Left cardiac atrium (tissue), 4 donors: ENCODE measurements at regions of chr17 and their contacts with region 1.

Region 1: GRCh38 chr17:1783834-1784611 is 22.2 kb downstream of the SERPINF1 start:
- DNase-seq: peak; percentile 89
- ATAC-seq: peak; percentile 76 to 77

Region 2: DNA sequence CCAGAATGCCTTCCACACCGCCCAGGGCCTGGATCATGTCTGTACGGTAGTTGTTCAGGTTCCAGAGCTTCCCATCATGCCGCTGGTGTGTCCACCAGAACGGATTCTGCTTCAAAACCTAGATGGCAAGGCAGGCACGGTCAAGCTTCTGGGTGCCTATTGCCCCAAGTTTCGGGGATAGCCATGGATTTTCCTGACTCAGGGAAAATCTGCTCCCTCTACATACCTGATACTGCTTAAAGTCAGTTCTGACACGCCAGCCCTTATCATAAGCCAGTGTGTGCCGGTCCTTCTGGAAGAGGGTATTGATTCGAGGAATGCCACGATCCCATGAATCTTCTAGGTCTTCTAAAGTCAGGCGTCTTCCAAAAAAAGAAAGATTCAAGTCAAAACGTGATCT is 123.0 kb before region 1 on chr17:
- intact Hi-C with region 1: loop called in 1 of 2 experiments (anchors 10 kb)
- DNase-seq: no peak
- ATAC-seq: no peak

Region 3: GRCh38 chr17:1673041-1673785 is 110.8 kb before region 1 on chr17:
- intact Hi-C with region 1: loop called (anchors 5 to 10 kb)
- DNase-seq: no peak
- ATAC-seq: no peak

Region 4: DNA sequence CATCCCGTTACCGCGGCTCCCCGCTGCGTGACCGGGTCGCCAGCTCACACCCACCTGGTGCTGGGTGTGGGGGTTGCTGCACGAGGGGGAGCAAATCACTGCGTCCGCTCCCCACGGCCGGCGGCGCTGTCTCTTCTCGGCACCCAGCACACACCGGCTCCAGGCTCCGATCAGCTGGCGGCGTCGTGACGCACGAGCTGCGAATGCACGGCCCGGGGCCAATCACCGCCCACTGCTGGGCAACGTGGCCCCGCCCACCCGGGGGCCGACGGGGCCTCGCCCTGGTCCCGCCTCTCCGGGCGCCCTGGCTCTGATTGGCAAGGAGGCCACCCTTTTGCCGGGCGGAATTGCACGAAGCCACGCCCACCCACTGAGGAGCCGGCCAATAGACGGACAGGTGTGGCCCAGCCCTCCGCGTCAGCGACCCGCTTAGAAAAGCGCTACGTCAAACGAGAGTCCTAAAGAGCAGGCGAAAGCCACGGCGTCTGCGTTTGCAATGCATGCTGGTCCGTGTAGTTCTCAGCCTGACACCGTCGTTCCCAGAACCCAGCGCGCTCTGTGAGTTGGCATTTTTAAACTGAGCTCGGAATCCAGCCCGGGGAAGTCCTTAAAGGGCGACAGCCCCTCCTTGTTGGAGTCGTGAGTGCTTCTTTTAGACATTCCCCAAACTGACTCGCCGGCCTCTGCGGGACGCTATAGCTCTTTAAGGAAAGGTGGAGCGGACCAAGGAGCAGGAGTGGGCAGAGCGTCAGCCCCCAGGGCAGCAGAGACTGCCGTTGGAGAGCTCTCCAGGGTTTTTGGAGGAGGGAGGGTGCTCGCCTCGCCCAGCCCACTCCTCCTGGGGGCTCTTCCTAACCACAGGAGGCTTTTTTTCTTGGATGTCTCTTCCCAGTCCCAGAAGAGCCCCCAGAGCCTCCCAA is 67.7 kb before region 1 on chr17:
- intact Hi-C with region 1: loop called (anchors 2 to 5 kb)
- DNase-seq: peak; percentile 100
- ATAC-seq: peak; percentile 74 to 79

Region 5: DNA sequence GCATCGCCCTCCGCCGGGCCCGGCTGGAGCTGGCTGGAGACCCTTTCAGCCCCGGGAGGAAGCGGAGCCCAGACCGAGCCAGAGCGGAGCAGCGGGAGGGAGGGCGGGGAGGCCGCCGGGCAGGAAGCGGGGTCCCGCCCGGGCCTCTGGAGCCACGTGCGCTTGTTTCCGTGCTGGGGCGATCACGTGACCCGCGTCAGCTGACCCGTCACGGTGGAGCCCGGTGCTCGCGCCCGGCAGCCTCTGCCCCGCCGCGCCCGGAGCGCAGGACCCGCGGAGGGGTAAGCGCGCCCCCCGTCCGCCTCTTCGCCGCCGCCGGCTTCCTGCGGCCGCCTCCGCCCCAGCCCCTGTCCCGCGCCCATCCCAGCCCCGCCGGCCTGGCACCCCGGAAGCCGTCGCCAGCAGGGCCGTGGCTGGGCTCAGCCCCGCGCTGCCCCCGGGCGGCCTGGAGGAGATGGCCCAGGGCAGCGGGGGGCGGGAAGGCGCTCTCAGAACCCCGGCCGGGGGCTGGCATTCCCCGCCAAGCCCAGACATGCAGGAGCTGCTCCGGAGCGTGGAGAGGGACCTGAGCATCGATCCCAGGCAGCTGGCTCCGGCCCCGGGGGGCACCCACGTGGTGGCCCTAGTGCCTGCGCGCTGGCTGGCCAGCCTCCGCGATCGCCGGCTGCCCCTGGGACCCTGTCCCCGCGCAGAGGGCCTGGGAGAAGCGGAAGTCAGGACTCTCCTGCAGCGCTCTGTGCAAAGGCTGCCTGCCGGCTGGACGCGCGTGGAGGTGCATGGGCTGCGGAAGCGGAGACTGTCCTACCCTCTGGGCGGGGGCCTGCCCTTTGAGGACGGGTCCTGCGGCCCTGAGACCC is 59.3 kb before region 1 on chr17 and contains the start of gene WDR81:
- intact Hi-C with region 1: loop called in 1 of 2 experiments (anchors 5 kb)
- DNase-seq: peak; percentile 97
- ATAC-seq: peak; percentile 85 to 92
- total RNA-seq, gene WDR81: 15.4 to 16.1 TPM

Region 6: DNA sequence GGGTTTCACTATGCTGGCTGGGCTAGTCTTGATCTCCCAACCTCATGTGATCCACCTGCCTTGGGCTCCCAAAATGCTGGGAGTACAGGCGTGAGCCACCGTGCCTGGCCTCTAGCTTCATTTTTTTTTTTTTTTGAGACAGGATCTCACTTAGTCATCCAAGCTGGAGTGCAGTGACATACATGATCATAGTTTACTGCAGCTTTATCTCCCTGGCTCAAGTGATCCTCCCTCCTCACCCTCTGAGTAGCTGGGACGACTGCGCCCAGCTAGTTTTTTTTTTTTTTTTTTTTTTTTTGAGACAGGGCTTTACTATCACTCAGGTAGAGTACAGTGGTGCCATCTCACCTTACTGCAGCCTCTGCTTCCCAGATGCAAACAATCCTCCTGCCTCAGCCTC is 55.5 kb after region 1 on chr17:
- intact Hi-C with region 1: no loop called
- DNase-seq: no peak
- ATAC-seq: peak in 1 of 2 donors; percentile 80

Region 7: DNA sequence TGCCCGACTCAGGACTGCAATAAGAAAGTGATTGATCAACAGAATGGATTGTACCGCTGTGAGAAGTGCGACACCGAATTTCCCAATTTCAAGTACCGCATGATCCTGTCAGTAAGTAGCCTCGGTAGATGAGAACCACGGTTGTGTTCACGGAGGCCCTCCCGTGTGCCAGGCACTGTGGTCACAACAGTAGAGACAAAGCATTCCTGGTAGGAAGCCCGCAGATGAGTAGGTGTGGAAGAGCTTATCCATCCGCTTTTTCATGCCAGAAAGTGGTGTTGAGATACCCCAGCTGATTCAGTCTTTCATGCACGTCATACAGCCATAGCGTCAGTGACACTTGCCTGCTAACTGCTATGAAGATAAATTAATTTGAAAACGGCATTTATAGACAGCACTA is 104.7 kb after region 1 on chr17:
- intact Hi-C with region 1: loop called in 1 of 2 experiments (anchors 2 kb)
- DNase-seq: peak; percentile 71
- ATAC-seq: peak; percentile 85 to 87